AG04450 (cell line): ENCODE measurements at regions of chr1 and their contacts with region 1.

Region 1: DNA sequence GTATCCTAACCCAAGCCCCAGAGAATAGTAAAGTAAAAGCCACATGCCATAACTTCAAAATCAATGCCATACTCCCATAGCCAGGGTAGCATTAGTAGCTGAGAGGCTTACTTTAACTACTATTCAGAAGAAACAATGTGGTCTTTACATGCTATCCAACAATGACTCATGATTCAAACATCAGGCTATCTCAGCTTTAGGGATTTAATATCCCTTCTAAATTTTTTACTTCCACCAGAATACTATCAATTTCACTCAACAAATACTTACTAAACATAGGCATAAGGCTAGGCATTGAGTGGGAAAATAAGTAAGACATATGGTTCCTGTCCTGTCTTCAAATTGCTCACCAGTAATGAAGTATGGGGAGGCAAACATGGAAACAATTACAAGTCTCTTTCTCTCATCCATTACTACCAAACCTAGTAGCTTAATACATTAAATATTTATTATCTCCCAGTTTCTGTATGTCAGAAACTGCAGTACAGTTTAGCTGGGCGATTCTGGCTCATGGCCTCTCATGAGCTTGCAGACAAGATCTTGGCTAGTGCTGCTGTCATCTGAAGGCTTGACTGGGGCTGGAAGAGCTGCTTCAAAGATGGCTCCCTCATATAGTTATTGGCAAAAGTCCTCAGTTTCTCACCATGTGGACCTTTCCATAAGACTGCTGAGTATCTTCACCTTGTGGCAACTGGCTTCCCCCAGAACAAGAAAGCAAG is 30.7 kb downstream of the EVI5 start:
- DNase-seq: peak; percentile 69
- H3K4me3 ChIP-seq: no peak overlapping the region
- H3K27ac ChIP-seq: peak overlapping the region; percentile 76
- H3K27me3 ChIP-seq: no peaks in the 10 kb centered on the region
- CTCF ChIP-seq: no peak

Region 2: DNA sequence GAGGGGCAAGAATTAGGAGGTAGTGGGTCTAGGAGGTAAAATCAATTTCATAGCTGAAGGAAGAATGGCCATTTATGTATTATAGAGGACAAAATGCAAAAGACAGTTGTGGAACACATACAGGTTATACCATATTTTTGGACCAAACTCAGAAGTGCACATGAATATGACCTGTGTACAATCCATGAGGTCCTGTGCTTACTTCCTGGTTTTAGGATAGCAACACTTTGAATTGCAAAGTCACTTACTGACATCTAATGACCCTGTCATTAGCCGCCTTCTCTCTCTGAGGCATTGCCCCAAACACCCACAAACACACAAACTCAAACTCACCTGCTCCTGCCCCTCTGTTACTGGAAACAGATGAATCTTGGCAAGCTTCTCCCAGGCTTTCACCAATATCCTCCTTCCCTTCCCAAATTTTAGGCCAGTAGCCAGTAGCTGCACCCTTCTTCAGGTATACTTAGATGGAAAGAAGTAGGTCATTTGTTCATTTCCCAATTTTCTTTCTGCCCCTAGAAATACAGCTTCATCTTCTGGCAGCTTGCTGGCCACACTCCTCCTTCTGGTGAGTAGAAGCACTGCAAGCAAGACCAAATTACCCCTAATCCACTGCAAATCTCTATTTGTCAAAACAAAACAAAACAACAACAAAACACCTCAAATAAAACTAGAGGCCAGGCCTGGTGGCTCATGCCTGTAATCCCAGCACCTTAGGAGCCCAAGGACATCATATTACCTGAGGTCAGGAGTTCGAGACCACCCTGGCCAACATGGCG is 64.0 kb after region 1 on chr1:
- CTCF ChIA-PET with region 1: interaction called, 57 read pairs
- POLR2A ChIA-PET with region 1: no interaction called
- DNase-seq: no peak
- H3K4me3 ChIP-seq: no peak overlapping the region
- H3K27ac ChIP-seq: no peak overlapping the region
- H3K27me3 ChIP-seq: no peaks in the 10 kb centered on the region
- CTCF ChIP-seq: peak; percentile 74